IMR-90 (cell line): ENCODE measurements at regions of chr2 and their contacts with region 1.

Region 1: DNA sequence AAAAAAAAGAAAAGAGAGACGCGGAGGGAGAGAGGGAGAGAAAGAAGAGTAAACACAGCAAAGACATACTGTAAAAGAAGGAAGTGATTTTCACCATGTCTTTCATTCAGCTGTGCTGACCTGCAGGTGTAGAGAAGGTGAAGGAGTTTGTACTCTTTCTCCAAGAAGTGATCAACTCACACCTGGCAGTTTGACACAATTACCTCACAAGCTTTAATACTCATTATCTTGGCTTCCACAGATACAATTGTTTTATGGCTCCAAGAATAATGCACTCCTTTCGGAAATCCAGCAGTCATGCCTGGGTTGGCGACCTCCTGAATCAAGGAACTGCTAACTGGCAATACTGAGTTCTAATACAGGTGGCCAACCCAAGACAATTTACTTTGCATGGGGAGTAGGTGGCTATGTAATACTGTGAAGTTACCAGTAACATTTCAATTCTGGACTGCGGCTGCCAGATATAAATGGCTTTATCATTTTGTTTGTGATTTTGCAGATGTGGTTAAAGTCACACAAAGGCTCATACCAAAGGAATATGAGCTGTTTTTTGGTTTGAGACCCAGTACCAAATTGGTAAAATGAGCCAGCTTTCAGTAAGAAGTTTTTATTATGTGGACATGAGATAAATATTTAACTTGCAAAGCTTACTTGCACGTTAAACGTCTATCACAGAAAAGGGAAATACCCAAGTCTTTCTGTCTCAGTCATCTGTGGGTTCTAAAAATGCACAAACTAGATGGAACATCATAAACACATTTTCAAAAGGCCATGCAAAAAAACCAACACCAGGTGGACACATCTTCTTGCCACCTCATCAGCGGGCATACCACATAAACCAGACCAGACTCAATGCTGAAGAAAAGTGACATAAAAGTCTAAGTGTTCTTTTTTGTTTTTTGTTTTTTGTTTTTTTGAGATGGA is 69.3 kb downstream of the NCKAP5 start:
- DNase-seq: peak; percentile 50
- ATAC-seq: peak; percentile 36; the same call in 1 of the 2 replicates
- H3K4me3 ChIP-seq: no peak overlapping the region
- H3K27ac ChIP-seq: peak overlapping the region; percentile 71; the same call in 1 of the 2 replicates
- H3K4me1 ChIP-seq: peaks cover 16% of the 10 kb centered on the region
- H3K27me3 ChIP-seq: no peaks in the 10 kb centered on the region
- CTCF ChIP-seq: no peak
- POLR2A ChIP-seq: no peak
- RAD21 ChIP-seq: no peak

Region 2: GRCh38 chr2:133346654-133347053 is 152.3 kb before region 1 on chr2:
- CTCF ChIA-PET with region 1: no interaction called
- POLR2A ChIA-PET with region 1: no interaction called
- dilution Hi-C with region 1: no loop called
- in situ Hi-C with region 1: no loop called
- intact Hi-C with region 1: no loop called
- DNase-seq: peak; percentile 93
- ATAC-seq: peak; percentile 95
- H3K4me3 ChIP-seq: no peak overlapping the region
- H3K27ac ChIP-seq: no peak overlapping the region
- H3K4me1 ChIP-seq: peaks cover 2% of the 10 kb centered on the region
- H3K27me3 ChIP-seq: no peaks in the 10 kb centered on the region
- CTCF ChIP-seq: no peak
- POLR2A ChIP-seq: no peak
- RAD21 ChIP-seq: peak; percentile 19; the same call in 1 of the 2 replicates

Region 3: DNA sequence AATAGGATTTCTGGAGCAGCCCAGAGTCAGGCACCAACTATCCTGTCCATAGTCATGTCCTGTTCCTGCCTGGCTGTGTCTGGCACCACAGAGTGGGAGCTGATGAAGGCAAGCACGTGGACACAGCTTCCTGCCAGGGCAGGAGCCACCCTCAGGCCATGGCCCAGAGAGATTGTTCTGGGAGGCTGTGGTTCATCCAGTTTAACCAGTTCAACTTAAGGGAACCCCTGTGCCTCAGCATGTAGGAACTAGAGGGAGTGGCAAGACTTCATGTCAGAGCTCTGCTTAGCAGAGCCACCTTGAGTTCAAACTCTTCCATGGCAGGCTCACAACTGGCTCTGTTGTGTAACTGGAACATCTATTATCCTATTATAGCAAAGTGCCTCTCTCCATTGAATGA is 142.6 kb after region 1 on chr2:
- CTCF ChIA-PET with region 1: interaction called, 3 read pairs
- POLR2A ChIA-PET with region 1: no interaction called
- dilution Hi-C with region 1: no loop called
- in situ Hi-C with region 1: no loop called
- intact Hi-C with region 1: loop called (anchors 10 kb)
- DNase-seq: peak; percentile 29
- ATAC-seq: peak; percentile 67
- H3K4me3 ChIP-seq: no peak overlapping the region
- H3K27ac ChIP-seq: no peak overlapping the region
- H3K4me1 ChIP-seq: peaks cover 4% of the 10 kb centered on the region
- H3K27me3 ChIP-seq: no peaks in the 10 kb centered on the region
- CTCF ChIP-seq: 0 out of 2 replicates have a peak, but pooled peaks have one; percentile 25
- POLR2A ChIP-seq: no peak
- RAD21 ChIP-seq: 0 out of 2 replicates have a peak, but pooled peaks have one; percentile 15